ENCODE measurements at regions of chr14 and their contacts with region 1.

Region 1: GRCh38 chr14:75452900-75453747 is 25.3 kb downstream of the JDP2 start:
- DNase-seq: peak; percentile 91
- H3K4me3 Mint-ChIP-seq: peak overlapping the region; percentile 11
- H3K27ac Mint-ChIP-seq: peak overlapping the region; percentile 69
- H3K4me1 Mint-ChIP-seq: peaks cover 67% of the 10 kb centered on the region
- H3K27me3 Mint-ChIP-seq: no peaks in the 10 kb centered on the region
- CTCF ChIP-seq: no peak

Region 2: DNA sequence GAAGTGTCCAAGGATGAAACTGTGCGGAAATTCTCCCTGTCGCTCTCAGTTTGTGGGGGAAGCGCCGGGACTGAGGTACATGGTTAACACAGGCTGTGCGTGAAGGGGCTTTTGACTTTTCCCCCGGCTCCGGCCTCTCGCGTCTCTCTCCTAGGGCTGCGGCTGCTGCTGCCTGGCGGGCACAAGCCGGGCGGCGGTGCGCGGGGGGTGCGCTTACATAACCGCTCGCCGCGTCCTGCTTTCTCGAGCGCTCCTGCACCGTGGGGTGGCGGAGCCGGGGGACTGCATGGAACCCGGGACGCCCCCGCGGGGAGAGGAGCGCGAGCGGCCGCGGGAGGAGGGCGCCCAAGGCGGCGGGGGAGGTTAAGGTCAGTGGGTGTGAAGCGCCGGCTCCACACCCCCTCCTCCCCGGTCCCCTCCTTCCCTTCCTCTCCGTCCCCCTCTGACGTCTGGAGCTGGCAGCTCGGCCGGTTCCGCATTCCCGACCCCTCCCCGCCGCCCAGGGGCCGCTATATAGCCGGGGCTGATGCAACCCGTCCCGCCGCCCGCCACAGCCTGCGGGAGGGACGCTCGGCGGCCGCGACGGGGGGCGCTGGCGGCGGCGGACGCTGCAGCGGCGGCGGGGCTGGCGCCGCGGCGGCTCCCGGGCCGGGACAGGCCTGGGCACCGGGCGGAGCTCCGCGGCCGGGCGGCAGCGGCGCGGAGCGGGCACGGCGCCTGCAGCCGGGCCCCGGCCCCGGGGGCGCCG is 25.5 kb before region 1 on chr14 and contains the start of gene JDP2:
- CTCF ChIA-PET with region 1: interaction called, 5 read pairs
- POLR2A ChIA-PET with region 1: interaction called, 29 read pairs
- intact Hi-C with region 1: no loop called
- DNase-seq: peak; percentile 62
- H3K4me3 Mint-ChIP-seq: peak within 1 kb of the TSS; percentile 76
- H3K27ac Mint-ChIP-seq: no peak within 1 kb of the TSS
- H3K4me1 Mint-ChIP-seq: peaks cover 17% of the 10 kb centered on the region
- H3K27me3 Mint-ChIP-seq: no peaks in the 10 kb centered on the region
- CTCF ChIP-seq: no peak
- total RNA-seq, gene JDP2: 38.9 and 45.3 TPM in 2 replicates

Region 3: GRCh38 chr14:75433631-75434071 is 19.5 kb before region 1 on chr14:
- CTCF ChIA-PET with region 1: interaction called, 5 read pairs
- POLR2A ChIA-PET with region 1: interaction called, 29 read pairs
- intact Hi-C with region 1: no loop called
- DNase-seq: no peak
- H3K4me3 Mint-ChIP-seq: no peak overlapping the region
- H3K27ac Mint-ChIP-seq: no peak overlapping the region
- H3K4me1 Mint-ChIP-seq: peaks cover 23% of the 10 kb centered on the region
- H3K27me3 Mint-ChIP-seq: no peaks in the 10 kb centered on the region
- CTCF ChIP-seq: no peak